ENCODE measurements at regions of chr7 and their contacts with region 1.

Region 1: DNA sequence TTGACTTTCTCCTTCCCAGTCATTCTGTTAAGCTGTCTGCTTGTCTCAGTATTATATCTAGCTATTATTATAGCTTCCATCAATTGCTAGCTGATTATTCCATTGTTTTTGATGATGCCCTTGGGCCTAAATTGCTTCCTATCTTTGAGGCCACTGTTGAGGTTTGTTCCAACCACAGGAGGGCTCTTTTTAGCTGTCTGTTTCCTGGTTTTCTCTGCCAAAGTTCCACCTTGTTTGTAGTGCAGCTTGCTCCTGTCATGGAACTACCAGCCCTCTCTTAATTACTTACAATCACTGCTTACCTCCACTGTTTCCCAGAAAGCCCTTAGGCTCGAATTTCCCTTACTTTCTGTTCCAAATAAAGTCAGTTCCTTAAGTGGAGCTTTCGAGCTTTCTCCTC is 118.7 kb upstream of the SEC61G start:
- DNase-seq: peak; percentile 35 to 73
- H3K4me3 ChIP-seq: no peak overlapping the region
- H3K27ac ChIP-seq: no peak overlapping the region
- H3K4me1 ChIP-seq: peaks cover 8% of the 10 kb centered on the region
- H3K27me3 ChIP-seq: no peaks in the 10 kb centered on the region
- CTCF ChIP-seq: peak; percentile 67

Region 2: DNA sequence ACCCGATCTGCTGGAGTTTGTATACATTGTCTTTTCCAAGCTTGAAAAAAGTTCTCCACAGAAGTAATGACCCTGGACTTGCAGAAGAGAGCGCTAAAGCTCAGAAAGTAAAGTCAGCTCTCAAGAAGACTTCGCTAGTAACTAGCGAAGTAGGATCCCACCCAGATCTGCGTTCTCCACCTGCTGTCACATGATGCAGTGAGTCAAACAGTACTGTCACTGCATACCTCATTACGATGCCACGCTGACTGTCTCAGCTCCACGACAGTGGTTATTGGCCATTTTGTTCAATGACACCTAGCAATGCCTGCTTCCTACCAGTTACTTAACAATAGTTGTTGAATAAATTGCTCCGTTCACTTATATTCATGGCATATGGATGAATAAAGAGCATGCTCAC is 89.0 kb before region 1 on chr7:
- CTCF ChIA-PET with region 1: no interaction called
- POLR2A ChIA-PET with region 1: no interaction called
- intact Hi-C with region 1: loop called (anchors 5 kb)
- DNase-seq: peak; percentile 79 to 99
- H3K4me3 ChIP-seq: no peak overlapping the region
- H3K27ac ChIP-seq: peak overlapping the region; percentile 27
- H3K4me1 ChIP-seq: peaks cover 29% of the 10 kb centered on the region
- H3K27me3 ChIP-seq: no peaks in the 10 kb centered on the region
- CTCF ChIP-seq: peak; percentile 95

Region 3: GRCh38 chr7:54932818-54933543 is 55.3 kb after region 1 on chr7:
- CTCF ChIA-PET with region 1: no interaction called
- POLR2A ChIA-PET with region 1: no interaction called
- intact Hi-C with region 1: loop called (anchors 5 kb)
- DNase-seq: peak; percentile 74 to 91
- H3K4me3 ChIP-seq: peak overlapping the region; percentile 60
- H3K27ac ChIP-seq: no peak overlapping the region
- H3K4me1 ChIP-seq: peaks cover 14% of the 10 kb centered on the region
- H3K27me3 ChIP-seq: no peaks in the 10 kb centered on the region
- CTCF ChIP-seq: no peak

Region 4: GRCh38 chr7:54995631-54996340 is 118.1 kb after region 1 on chr7:
- CTCF ChIA-PET with region 1: no interaction called
- POLR2A ChIA-PET with region 1: interaction called, 4 read pairs
- intact Hi-C with region 1: loop called (anchors 5 kb)
- DNase-seq: peak; percentile 71 to 99
- H3K4me3 ChIP-seq: peak overlapping the region; percentile 13
- H3K27ac ChIP-seq: peak overlapping the region; percentile 89
- H3K4me1 ChIP-seq: peaks cover 56% of the 10 kb centered on the region
- H3K27me3 ChIP-seq: no peaks in the 10 kb centered on the region
- CTCF ChIP-seq: peak; percentile 9; the same call in 1 of the 2 replicates

Region 5: DNA sequence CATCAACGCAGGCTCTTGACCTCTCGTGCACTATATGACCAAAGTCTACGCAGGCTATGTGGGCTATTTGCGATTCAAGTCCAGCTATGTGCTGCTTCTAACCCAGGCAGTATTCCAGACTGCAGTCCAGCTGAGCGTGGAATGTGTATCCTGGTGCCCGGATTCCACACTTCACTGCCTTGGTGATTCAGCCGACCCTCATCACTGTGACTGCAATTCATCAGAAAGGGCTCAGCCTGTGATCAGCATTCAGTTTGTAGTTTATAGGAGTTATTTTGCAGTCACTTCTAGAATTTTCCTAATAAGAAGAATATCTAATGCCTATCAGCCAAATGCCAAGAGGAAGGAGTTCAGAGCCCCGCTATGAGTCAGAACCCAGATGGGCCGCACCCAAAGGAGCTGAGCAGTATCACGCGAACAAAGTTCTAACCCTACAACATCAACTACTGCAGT is 367.6 kb after region 1 on chr7:
- CTCF ChIA-PET with region 1: no interaction called
- POLR2A ChIA-PET with region 1: interaction called, 19 read pairs
- intact Hi-C with region 1: no loop called
- DNase-seq: peak; percentile 63 to 72
- H3K4me3 ChIP-seq: no peak overlapping the region
- H3K27ac ChIP-seq: no peak overlapping the region
- H3K4me1 ChIP-seq: peaks cover 17% of the 10 kb centered on the region
- H3K27me3 ChIP-seq: no peaks in the 10 kb centered on the region
- CTCF ChIP-seq: no peak

Region 6: DNA sequence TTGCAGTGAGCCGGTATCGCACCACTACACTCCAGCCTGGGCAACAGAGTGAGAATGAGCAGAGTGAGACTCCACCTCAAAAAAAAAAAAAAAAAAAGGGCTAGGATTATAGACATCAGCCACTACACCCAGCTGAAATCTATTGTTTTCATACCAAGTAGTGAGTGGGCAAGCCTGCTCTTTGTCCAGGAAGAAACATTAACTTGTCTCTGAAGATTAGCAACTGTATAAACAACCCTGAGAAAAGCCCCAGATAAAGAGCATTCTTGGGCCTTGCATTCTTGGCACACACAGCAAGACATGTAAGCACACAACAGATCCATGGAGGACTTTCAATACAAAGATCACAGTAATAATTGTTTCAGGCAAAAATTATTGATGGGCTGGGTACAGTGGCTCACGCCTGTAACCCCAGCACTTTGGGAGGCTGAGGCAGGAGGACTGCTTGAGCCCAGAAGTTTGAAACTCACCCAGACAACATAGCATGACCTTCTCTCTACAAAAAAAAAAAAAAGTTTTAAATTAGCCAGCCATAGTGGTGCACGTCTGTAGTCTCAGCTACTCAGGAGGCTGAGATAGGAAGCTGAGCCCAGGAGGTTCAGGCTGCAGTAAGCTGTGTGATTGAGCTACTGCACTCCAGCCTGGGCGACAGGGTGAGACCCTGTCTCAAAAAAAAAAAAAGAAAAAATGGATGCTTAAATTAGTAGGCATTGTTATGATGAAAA is 1169.2 kb after region 1 on chr7:
- CTCF ChIA-PET with region 1: no interaction called
- POLR2A ChIA-PET with region 1: no interaction called
- intact Hi-C with region 1: no loop called
- DNase-seq: no peak
- H3K4me3 ChIP-seq: no peak overlapping the region
- H3K27ac ChIP-seq: no peak overlapping the region
- H3K4me1 ChIP-seq: peaks cover 13% of the 10 kb centered on the region
- H3K27me3 ChIP-seq: no peaks in the 10 kb centered on the region
- CTCF ChIP-seq: no peak

Measured in PC-9 (cell line).